Prostate gland (tissue), 2 donors: ENCODE measurements at regions of chr6 and their contacts with region 1.

Region 1: DNA sequence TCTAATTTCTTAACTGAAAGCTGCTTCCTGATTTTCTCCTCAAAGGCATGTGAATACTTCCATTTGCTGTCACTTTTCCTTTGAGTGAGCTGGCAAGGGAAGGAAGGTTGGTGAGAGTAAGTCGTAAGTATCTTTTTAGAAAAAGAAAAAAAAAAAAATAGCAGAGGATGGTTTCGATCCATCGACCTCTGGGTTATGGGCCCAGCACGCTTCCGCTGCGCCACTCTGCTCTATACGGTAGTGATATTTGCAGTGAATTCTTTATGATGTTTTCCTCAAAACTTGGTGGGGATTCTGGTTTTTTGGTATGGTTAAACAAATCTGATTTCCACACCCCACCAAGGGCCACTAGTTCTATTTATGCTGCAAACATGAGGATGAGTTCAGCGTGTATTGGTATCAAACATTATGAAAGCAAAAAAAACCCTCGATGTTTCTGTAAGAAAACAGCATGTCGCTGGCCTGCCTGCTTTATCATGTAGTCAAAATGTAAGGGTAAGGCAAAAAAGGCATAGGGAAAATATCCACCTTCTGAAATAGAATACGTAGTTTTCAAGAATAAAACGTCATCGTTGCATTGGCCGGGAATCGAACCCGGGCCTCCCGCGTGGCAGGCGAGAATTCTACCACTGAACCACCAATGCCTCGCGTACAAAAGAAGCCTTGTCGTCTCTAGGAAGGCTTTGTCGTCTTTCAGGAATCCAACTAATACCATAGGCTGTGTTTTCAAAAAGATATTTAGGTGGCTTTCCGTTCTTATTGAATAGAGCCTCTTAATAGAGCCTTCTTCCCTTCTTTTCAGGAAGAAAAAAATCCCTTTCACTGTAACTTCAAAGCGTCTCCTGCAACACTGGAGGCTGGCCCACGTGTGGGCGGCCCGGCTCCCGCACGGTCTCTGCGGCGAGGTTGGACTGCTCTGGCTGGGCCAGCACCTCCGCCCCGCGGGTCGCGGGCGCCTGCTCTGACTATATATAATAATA is 9.6 kb downstream of the OR2B2 start:
- DNase-seq: peak; percentile 79
- H3K4me3 ChIP-seq: peak overlapping the region; percentile 40
- H3K27ac ChIP-seq: peak overlapping the region; percentile 61 to 79
- H3K4me1 ChIP-seq: no peaks in the 10 kb centered on the region
- H3K27me3 ChIP-seq: no peaks in the 10 kb centered on the region
- CTCF ChIP-seq: no peak
- POLR2A ChIP-seq: no peak

Region 2: DNA sequence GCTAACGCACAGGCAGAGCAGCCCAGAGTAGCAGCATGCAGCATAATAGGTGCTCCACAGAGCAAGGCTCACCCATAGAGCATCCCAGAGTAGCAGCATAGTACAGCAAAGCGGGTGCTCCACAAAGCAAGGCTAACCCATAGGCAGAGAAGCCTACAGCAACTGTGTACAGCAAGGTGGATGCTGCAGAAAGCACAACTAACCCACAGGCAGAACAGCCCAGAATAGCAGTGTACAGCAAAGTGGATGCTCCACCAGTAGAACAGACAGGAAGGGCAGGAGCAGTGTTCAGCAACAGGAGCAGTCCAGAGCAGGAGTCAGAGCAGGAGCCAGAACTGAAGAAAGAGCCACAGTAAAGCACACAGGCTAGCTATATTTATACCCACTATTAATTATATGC is 787.8 kb before region 1 on chr6:
- intact Hi-C with region 1: no loop called
- DNase-seq: no peak
- H3K4me3 ChIP-seq: no peak overlapping the region
- H3K27ac ChIP-seq: no peak overlapping the region
- H3K4me1 ChIP-seq: no peaks in the 10 kb centered on the region
- H3K27me3 ChIP-seq: no peaks in the 10 kb centered on the region
- CTCF ChIP-seq: no peak
- POLR2A ChIP-seq: no peak

Region 3: DNA sequence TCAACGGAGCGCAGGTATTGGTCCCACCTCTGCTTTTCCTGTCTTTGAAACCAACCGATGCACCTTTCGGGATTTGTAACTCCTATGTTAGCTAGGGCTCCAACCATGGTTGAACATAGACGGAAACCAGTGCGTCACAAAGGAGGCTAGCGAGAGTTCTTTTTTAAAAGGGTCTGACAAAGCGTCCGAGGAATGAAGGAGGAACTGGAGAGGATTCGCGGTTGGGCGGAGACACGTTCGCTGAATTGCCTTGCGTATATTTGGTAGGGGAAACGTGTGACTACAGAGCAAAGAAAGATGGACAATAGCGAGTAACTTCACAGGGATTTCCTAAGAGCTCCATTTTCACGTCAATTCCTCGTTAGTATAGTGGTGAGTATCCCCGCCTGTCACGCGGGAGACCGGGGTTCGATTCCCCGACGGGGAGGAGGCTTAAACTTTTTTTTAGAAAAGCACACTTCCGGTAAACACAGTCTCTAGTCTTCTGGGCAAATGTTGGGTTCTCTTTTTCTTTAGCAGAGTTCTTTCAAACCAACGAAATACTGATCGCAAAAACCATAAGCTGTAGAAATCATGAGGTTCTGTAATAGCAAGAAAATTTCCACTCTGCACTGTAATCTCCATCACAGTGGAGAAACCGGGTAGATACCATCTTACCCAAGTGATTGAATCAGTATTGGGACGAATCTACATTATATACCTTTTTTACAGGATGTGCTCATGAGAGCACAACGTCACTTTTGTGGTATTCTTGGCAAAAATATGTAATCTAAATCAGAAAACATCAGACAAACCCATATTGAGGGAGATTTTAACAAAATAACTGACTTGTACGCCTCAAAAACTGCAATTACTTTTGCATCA is 423.1 kb before region 1 on chr6:
- intact Hi-C with region 1: loop called (anchors 2 kb)
- DNase-seq: peak; percentile 76
- H3K4me3 ChIP-seq: peak overlapping the region; percentile 41 to 61
- H3K27ac ChIP-seq: peak overlapping the region; percentile 96
- H3K4me1 ChIP-seq: no peaks in the 10 kb centered on the region
- H3K27me3 ChIP-seq: no peaks in the 10 kb centered on the region
- CTCF ChIP-seq: peak in 2 of 4 experiments; percentile 6 to 8
- POLR2A ChIP-seq: peak; percentile 43